Brain microvascular endothelial cell (primary cell): ENCODE measurements at regions of chr4 and their contacts with region 1.

Region 1: GRCh38 chr4:52572936-52573485 is 86.1 kb downstream of the USP46 start:
- DNase-seq: no peak
- H3K4me3 ChIP-seq: no peak overlapping the region
- H3K27ac ChIP-seq: no peak overlapping the region
- H3K27me3 ChIP-seq: no peaks in the 10 kb centered on the region
- CTCF ChIP-seq: no peak

Region 2: DNA sequence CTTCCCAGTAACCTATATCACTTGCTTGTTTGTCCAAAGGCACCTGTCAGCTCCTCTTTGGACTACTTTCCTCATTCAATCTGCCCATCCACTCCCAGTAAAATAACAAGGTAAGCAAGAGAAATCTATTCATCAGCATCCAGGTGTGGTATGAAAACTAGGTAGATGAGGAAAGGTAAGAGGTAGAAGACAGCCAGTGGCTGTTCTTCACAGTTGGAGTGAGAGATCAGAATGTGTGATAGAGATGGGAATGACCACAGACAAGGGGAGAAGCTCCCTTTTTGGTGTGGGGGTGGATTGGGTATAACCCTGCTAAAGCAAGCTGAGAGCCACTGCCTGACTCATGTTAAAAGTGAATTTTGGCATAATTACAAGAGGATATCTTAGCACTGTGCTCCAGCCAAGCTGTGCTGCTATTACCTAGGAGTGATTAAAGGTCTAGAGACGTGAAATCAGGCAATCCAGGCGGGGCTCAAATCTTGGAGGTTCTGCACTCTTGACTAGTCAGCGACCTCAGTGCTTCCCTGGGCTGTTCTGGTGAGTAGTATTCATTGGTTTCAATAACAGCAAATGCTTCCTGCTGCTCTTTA is 261.0 kb after region 1 on chr4:
- in situ Hi-C with region 1: no loop called
- DNase-seq: no peak
- H3K4me3 ChIP-seq: no peak overlapping the region
- H3K27ac ChIP-seq: no peak overlapping the region
- H3K27me3 ChIP-seq: no peaks in the 10 kb centered on the region
- CTCF ChIP-seq: no peak

Region 3: GRCh38 chr4:52957220-52957686 is 384.2 kb after region 1 on chr4:
- in situ Hi-C with region 1: loop called (anchors 25 kb)
- DNase-seq: no peak
- H3K4me3 ChIP-seq: no peak overlapping the region
- H3K27ac ChIP-seq: no peak overlapping the region
- H3K27me3 ChIP-seq: no peaks in the 10 kb centered on the region
- CTCF ChIP-seq: no peak